Ovary (tissue), 10 donors: ENCODE measurements at regions of chr15 and their contacts with region 1.

Region 1: DNA sequence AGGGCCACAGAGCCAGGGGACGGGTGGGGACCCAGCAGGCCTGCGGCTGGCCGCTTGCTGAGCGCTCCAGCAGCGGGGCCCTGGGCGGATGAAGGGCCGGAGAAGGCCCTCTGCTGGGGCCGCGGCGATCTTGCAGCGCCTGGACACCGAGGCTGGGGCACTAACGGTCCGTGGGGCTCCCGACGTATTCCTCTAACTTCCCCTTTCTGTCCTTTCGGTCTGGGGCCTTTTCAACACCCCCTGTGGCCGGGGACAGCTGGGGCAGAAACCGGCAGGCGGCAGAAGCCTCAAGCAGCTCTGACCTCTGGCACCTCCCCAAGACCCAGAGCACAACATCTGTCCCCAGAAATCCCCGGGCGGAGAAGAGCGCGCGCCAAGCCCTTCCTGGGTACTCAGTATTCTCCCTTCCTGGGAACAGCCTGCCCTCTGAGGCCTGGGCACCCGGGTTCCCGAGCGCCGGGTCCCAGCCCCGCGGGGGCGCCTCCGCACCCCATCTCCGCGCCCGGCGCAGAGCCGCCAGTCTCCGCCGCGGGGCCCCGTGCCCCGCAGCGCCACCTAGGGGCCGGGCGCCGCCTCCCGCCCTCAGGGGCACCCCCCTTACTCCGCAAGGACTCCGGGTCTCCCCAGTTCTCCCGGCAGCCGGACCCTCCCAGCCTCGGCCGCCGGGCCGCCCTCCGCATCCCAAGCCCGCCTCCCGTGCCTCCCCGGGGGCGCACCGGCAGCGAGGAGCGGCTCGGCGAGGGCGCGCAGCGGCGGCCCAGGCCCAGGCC is 582 bp upstream of the SLCO3A1 start:
- DNase-seq: peak; percentile 62 to 83 (median 76)
- H3K4me3 ChIP-seq: peak overlapping the region; percentile 67
- H3K27ac ChIP-seq: peak overlapping the region; percentile 94 to 95
- H3K4me1 ChIP-seq: peaks cover 13% of the 10 kb centered on the region
- H3K27me3 ChIP-seq: no peaks in the 10 kb centered on the region
- CTCF ChIP-seq: peak in 2 of 3 donors; percentile 71 to 82
- EP300 ChIP-seq: no peak
- POLR2A ChIP-seq: no peak

Region 2: DNA sequence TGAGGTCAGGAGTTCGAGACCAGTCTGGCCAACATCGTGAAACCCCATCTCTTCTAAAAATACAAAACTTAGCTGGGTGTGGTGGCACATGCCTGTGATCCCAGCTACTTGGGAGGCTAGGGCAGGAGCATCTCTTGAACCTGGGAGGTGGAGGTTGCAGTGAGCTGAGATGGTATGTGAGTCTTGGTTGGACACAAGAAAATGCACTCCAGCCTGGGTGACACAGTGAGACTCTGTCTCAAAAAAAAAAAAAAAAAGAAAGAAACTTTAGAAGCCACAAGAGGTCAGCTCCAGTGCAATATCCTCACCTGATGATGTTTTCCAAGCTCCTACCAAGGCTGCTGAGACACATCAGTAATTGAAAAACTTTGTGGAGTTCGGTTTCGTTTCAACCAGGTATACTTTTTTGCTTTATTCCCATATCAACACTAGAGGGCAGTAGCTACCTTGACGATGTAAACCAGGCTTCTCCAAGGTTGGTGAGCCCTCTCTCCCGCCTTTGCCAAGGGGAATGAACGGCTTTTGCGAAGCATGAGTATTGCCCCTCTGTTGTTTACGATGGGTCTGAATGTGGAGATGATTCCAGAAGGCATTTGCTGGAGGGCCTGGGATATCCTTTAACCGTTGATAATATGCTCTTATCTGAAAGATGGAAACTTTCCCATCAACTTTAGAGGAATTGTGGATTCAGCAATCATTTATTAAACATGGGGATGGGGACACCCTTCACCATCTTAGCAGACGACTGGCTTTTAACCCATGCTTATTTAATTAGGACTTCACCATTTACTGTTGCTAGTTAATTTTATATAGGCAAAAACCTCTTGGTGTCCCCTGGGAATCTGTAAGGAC is 550.1 kb before region 1 on chr15:
- intact Hi-C with region 1: loop called in 1 of 4 experiments (anchors 10 kb)
- DNase-seq: peak in 2 of 5 donors; percentile 17 to 23
- H3K4me3 ChIP-seq: no peak overlapping the region
- H3K27ac ChIP-seq: no peak overlapping the region
- H3K4me1 ChIP-seq: no peaks in the 10 kb centered on the region
- H3K27me3 ChIP-seq: no peaks in the 10 kb centered on the region
- CTCF ChIP-seq: peak in 1 of 3 donors; percentile 37
- EP300 ChIP-seq: no peak
- POLR2A ChIP-seq: no peak

Region 3: GRCh38 chr15:91706322-91707032 is 146.4 kb before region 1 on chr15:
- intact Hi-C with region 1: loop called in 1 of 4 experiments (anchors 10 kb)
- DNase-seq: peak; percentile 47 to 76 (median 70)
- H3K4me3 ChIP-seq: no peak overlapping the region
- H3K27ac ChIP-seq: no peak overlapping the region
- H3K4me1 ChIP-seq: no peaks in the 10 kb centered on the region
- H3K27me3 ChIP-seq: no peaks in the 10 kb centered on the region
- CTCF ChIP-seq: peak; percentile 22 to 42 (median 31)
- EP300 ChIP-seq: no peak
- POLR2A ChIP-seq: no peak

Region 4: DNA sequence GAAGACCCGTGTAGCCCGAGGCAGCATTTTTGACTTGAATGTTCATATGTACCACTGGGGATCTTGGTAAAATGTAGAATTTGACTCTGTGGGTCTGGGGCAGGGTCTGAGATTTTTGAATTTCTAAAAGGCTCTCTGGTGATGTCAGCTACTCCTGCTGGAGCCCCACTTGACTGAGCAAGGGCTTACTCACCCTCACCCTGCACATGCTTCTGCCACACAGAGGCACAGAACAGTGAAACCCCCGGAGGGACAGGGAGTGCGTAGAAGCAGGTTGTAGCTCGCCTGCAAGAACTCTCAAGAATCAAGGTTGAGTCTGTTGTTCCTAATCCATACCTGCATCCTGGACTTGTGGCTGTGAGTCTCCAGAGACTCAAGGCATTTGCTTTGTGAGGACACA is 41.7 kb after region 1 on chr15:
- intact Hi-C with region 1: no loop called
- DNase-seq: no peak
- H3K4me3 ChIP-seq: no peak overlapping the region
- H3K27ac ChIP-seq: no peak overlapping the region
- H3K4me1 ChIP-seq: peaks cover 2% of the 10 kb centered on the region
- H3K27me3 ChIP-seq: no peaks in the 10 kb centered on the region
- CTCF ChIP-seq: no peak
- EP300 ChIP-seq: no peak
- POLR2A ChIP-seq: no peak

Region 5: GRCh38 chr15:91942676-91943576 is 90.0 kb after region 1 on chr15:
- intact Hi-C with region 1: loop called in 1 of 4 experiments (anchors 10 kb)
- DNase-seq: peak; percentile 75 to 92 (median 78)
- H3K4me3 ChIP-seq: no peak overlapping the region
- H3K27ac ChIP-seq: peak overlapping the region in 1 of 2 donors; percentile 42
- H3K4me1 ChIP-seq: peaks cover 26% of the 10 kb centered on the region
- H3K27me3 ChIP-seq: no peaks in the 10 kb centered on the region
- CTCF ChIP-seq: no peak
- EP300 ChIP-seq: no peak
- POLR2A ChIP-seq: no peak

Region 6: GRCh38 chr15:92069308-92070250 is 216.7 kb after region 1 on chr15:
- intact Hi-C with region 1: loop called in 2 of 4 experiments (anchors 5 to 10 kb)
- DNase-seq: no peak
- H3K4me3 ChIP-seq: no peak overlapping the region
- H3K27ac ChIP-seq: no peak overlapping the region
- H3K4me1 ChIP-seq: peaks cover 4% of the 10 kb centered on the region
- H3K27me3 ChIP-seq: no peaks in the 10 kb centered on the region
- CTCF ChIP-seq: no peak
- EP300 ChIP-seq: no peak
- POLR2A ChIP-seq: no peak

Region 7: GRCh38 chr15:92077353-92078085 is 224.6 kb after region 1 on chr15:
- intact Hi-C with region 1: loop called (anchors 5 to 10 kb)
- DNase-seq: peak; percentile 31 to 62 (median 61)
- H3K4me3 ChIP-seq: no peak overlapping the region
- H3K27ac ChIP-seq: no peak overlapping the region
- H3K4me1 ChIP-seq: no peaks in the 10 kb centered on the region
- H3K27me3 ChIP-seq: no peaks in the 10 kb centered on the region
- CTCF ChIP-seq: peak in 2 of 3 donors; percentile 21 to 43
- EP300 ChIP-seq: no peak
- POLR2A ChIP-seq: no peak